Vagina (tissue), 2 donors: ENCODE measurements at regions of chrX and their contacts with region 1.

Region 1: DNA sequence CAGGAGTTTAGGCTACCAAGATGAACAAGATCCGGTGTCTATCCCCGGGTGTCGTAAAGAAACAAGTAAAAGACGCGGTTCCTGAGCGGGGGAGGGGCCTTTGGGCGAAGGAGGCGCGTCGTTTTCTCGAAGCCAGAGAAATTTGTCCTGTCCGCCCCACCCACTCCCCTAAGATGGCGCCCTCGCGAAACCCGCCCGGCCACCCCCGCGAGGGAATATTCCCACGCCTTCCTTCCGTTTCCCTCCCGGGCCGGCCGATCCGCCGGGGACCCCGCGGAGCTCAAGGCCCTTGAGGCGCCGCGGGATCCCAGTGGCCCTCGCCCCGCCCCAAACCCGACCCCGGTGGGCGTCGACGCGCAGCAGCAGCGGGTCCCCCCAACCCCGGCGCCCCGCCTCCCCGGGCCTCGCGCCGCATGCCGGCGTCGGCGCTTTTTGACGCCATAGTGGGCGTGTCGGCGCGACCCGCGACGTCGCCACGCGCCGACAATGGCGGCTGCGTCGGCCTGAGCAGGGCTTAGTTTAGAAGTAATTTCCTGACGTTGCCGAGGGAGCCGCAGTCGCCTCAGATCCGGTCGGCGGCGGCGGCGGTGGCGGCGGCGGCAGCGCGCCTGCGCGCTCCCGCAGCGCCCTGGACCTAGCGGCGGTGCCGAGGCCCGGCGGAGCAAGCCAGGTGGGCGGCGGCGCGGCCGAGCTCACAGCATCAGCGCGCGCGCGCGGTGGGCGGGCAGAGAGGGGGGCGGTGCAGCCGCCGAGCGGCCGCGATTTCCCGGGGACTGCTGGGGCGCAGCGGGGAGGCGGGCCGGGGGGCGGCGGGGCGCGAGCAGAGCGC is at the start of gene HTATSF1:
- DNase-seq: no peak
- H3K4me3 ChIP-seq: peak within 1 kb of the TSS; percentile 52 to 54
- H3K27ac ChIP-seq: peak within 1 kb of the TSS; percentile 88
- H3K4me1 ChIP-seq: peaks cover 7% of the 10 kb centered on the region
- H3K27me3 ChIP-seq: no peaks in the 10 kb centered on the region
- CTCF ChIP-seq: no peak
- POLR2A ChIP-seq: peak in 1 of 2 donors; percentile 13
- total RNA-seq, gene HTATSF1: 60.9 TPM

Region 2: GRCh38 chrX:136251041-136251991 is 245.7 kb before region 1 on chrX and contains the start of gene MAP7D3:
- intact Hi-C with region 1: no loop called
- DNase-seq: no peak
- H3K4me3 ChIP-seq: peak within 1 kb of the TSS; percentile 64 to 70
- H3K27ac ChIP-seq: peak within 1 kb of the TSS; percentile 69
- H3K4me1 ChIP-seq: peaks cover 13% of the 10 kb centered on the region
- H3K27me3 ChIP-seq: no peaks in the 10 kb centered on the region
- CTCF ChIP-seq: no peak
- POLR2A ChIP-seq: peak in 1 of 2 donors; percentile 45
- total RNA-seq, gene MAP7D3: 15.0 TPM

Region 3: DNA sequence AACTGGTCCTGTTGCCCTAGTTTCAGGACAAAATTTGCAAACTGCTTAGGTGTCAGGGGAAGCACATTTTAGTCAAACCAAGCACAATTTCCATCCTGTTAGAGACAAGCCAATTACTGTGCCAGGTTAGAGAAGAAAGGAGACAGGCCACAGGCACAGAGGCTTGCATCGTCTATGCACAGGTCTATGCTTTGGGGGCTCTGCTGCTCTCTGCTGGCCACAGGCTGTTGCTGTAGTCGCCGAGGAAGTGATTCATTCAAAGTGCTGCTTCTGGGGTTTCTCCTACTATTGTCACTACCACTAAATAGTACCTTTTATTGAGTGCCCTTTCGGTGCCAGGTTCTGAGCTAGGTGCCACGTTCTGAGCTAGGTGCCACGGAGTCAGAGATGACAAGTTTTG is 80.6 kb after region 1 on chrX:
- intact Hi-C with region 1: loop called (anchors 5 kb)
- DNase-seq: no peak
- H3K4me3 ChIP-seq: no peak overlapping the region
- H3K27ac ChIP-seq: no peak overlapping the region
- H3K4me1 ChIP-seq: no peaks in the 10 kb centered on the region
- H3K27me3 ChIP-seq: no peaks in the 10 kb centered on the region
- CTCF ChIP-seq: peak in 1 of 3 experiments; percentile 23
- POLR2A ChIP-seq: no peak